ENCODE measurements at regions of chr4 and their contacts with region 1.

Region 1: GRCh38 chr4:36285784-36286480 is 4.5 kb downstream of the DTHD1 start:
- DNase-seq: peak; percentile 79
- H3K4me3 Mint-ChIP-seq: peak overlapping the region; percentile 22
- H3K27ac Mint-ChIP-seq: peak overlapping the region; percentile 85
- H3K4me1 Mint-ChIP-seq: peaks cover 32% of the 10 kb centered on the region
- H3K27me3 Mint-ChIP-seq: no peaks in the 10 kb centered on the region

Region 2: DNA sequence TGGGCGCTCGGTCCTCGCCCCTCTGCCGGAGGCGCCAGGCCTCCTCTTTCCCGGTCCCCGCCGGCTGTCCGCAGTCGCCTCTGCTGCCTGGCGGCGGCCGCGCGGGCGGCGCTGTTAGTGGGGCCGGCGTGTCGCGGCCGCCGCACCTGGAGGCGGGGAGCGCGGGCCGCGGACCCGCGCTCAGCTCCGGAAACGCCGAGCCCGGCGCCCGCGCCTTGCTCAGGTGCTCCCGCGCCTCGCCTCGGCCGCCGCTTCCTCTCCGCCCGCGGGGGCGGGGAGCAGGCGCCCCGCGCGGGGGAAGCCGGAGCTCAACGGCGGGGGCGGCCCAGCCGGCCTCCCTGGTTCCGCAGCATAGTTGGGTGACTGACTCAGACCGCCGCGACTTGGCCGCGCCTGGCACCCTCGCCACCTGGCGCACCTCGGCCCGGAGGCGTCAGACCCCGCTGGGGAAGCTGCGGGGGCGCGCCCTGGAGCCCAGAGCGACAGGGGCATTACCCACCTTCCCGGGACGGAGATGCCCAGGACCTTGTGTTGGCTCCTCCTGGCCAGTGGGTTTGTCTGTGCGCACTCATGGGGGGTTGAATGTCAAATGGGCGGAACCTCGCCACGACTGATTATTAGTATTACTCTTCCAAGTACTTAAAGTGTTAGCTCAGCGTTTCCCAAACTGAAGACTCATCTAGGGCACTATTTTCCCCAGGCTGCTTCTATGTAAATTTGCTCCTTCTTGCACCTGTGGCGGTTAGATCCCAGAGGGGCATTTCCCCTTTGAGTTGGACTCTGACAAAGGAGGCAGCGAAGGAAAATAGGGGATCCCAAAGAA is 41.5 kb before region 1 on chr4 and contains the start of gene ARAP2:
- CTCF ChIA-PET with region 1: interaction called, 4 read pairs
- intact Hi-C with region 1: loop called (anchors 1 kb)
- DNase-seq: peak; percentile 77
- H3K4me3 Mint-ChIP-seq: peak within 1 kb of the TSS; percentile 94
- H3K27ac Mint-ChIP-seq: peak within 1 kb of the TSS; percentile 88
- H3K4me1 Mint-ChIP-seq: peaks cover 24% of the 10 kb centered on the region
- H3K27me3 Mint-ChIP-seq: no peaks in the 10 kb centered on the region
- total RNA-seq, gene ARAP2: 29.6 to 38.2 TPM

Region 3: DNA sequence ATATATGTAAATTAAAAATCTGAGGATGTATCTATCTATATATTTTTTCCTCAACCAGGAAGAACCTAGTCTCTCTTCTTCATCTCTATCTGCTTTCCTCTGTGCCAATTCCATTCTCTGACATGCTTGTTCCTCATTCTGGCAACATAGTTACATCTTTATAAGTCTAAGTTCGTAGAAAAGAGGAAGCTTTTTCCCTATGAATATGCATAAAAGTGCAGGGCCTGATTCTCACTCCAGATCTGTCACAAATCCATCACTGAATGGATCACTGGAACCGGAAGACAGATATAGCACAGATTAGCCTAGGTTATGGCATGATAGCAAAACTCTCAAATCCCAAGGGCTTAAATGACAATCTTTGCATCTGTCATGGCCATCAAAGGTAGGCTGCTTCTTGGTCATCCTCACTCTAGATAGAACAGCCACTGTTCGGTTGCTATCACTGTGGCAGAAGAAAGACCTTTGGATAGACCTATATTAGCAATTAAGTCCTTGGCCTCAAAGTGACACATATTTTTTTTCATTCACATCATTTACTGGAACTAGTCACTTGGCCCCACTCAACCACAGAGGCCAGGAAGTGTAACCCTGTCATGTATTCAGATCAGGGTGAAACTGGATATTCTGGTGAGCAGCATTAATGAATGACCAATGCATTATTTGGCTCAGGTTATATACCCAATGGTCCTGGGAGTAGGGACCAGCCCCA is 17.6 kb after region 1 on chr4:
- CTCF ChIA-PET with region 1: no interaction called
- intact Hi-C with region 1: loop called (anchors 2 kb)
- DNase-seq: peak; percentile 27
- H3K4me3 Mint-ChIP-seq: no peak overlapping the region
- H3K27ac Mint-ChIP-seq: no peak overlapping the region
- H3K4me1 Mint-ChIP-seq: peaks cover 8% of the 10 kb centered on the region
- H3K27me3 Mint-ChIP-seq: no peaks in the 10 kb centered on the region

Region 4: DNA sequence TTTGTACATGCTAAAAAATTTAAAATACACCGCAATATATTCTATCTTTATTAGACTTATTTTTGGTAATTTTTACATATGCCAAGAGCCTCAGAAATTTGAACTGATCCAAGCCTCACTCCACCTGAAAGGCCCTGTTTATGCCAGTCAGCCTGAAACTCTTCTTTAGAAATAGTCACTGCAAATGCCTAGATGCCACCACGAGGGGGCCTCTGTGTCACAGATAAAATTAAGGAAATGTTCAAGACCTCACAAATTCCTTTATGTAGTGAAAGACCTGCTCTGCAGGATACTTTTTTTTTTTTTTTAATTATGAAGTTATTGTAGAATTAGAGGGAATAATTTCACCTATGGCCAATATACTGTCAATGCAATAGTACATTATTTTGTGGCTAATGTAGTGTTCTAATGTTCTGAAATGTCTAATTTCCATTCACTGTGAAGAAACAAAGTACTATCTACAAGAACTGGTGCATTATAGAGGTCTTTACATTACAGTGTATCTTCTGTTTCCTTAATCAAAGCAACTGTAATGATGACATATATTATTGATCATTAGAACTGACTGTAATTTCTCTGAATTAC is 65.2 kb after region 1 on chr4:
- CTCF ChIA-PET with region 1: interaction called, 7 read pairs
- intact Hi-C with region 1: loop called (anchors 1 kb)
- DNase-seq: peak; percentile 89
- H3K4me3 Mint-ChIP-seq: no peak overlapping the region
- H3K27ac Mint-ChIP-seq: no peak overlapping the region
- H3K4me1 Mint-ChIP-seq: peaks cover 15% of the 10 kb centered on the region
- H3K27me3 Mint-ChIP-seq: peaks cover 4% of the 10 kb centered on the region

Region 5: GRCh38 chr4:36399762-36400353 is 113.9 kb after region 1 on chr4:
- CTCF ChIA-PET with region 1: interaction called, 4 read pairs
- intact Hi-C with region 1: loop called (anchors 1 kb)
- DNase-seq: peak; percentile 76
- H3K4me3 Mint-ChIP-seq: no peak overlapping the region
- H3K27ac Mint-ChIP-seq: no peak overlapping the region
- H3K4me1 Mint-ChIP-seq: peaks cover 19% of the 10 kb centered on the region
- H3K27me3 Mint-ChIP-seq: no peaks in the 10 kb centered on the region

Measured in activated naive CD4-positive, alpha-beta T cell treated with anti-CD3 and anti-CD28 coated beads for 36 hours (primary cell).